Activated CD4-positive, alpha-beta memory T cell treated with anti-CD3 and anti-CD28 coated beads, Interleukin-2, amount 10 ng/mL, durations not matched to agents 7 days and 5 days (primary cell): ENCODE measurements at regions of chr14 and their contacts with region 1.

Region 1: GRCh38 chr14:65958664-65959562 is 527.3 kb upstream of the CCDC196 start:
- DNase-seq: no peak
- H3K4me3 Mint-ChIP-seq: no peak overlapping the region
- H3K27ac Mint-ChIP-seq: no peak overlapping the region
- H3K4me1 Mint-ChIP-seq: peaks cover 34% of the 10 kb centered on the region
- H3K27me3 Mint-ChIP-seq: no peaks in the 10 kb centered on the region

Region 2: DNA sequence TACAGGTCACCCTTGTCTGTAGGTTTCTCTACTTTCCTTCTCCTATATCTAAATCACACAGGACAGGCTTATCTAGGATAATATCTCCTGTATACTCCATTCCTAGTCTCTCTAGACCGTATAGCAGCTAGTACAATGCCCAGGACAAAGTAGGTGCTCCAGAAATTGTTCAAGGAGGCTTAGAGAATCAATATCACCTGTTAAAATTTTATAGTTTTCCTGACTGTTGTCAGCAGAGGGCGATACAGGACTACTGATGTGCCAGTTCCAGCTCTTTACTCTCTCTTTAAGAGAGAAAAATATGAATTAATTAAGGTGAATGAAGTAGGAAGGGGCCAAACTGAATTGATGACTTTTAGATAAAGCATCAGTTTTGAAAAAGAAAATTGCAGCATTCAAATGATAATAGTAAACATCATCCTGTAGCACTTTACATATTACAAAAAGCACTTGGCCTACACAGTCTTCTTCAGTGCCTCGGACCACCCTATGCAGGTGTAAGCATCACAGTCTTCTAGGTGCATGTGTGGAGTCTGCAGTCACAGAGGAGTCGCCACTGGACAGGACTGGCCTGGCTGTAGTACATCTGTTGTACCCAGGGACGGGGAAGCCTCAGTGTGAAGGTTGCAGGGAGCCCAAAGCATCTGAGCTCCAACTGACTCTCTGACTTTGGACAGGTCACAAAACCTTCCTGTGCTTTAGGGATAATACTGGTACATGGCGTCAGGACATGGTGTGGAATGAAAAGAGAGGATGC is 794.7 kb before region 1 on chr14:
- CTCF ChIA-PET with region 1: interaction called, 20 read pairs
- POLR2A ChIA-PET with region 1: interaction called, 3 read pairs
- DNase-seq: peak; percentile 49
- H3K4me3 Mint-ChIP-seq: no peak overlapping the region
- H3K27ac Mint-ChIP-seq: no peak overlapping the region
- H3K4me1 Mint-ChIP-seq: peaks cover 22% of the 10 kb centered on the region
- H3K27me3 Mint-ChIP-seq: no peaks in the 10 kb centered on the region

Region 3: GRCh38 chr14:65661861-65662260 is 297.1 kb before region 1 on chr14:
- CTCF ChIA-PET with region 1: no interaction called
- POLR2A ChIA-PET with region 1: no interaction called
- DNase-seq: no peak
- H3K4me3 Mint-ChIP-seq: no peak overlapping the region
- H3K27ac Mint-ChIP-seq: no peak overlapping the region
- H3K4me1 Mint-ChIP-seq: no peaks in the 10 kb centered on the region
- H3K27me3 Mint-ChIP-seq: no peaks in the 10 kb centered on the region

Region 4: DNA sequence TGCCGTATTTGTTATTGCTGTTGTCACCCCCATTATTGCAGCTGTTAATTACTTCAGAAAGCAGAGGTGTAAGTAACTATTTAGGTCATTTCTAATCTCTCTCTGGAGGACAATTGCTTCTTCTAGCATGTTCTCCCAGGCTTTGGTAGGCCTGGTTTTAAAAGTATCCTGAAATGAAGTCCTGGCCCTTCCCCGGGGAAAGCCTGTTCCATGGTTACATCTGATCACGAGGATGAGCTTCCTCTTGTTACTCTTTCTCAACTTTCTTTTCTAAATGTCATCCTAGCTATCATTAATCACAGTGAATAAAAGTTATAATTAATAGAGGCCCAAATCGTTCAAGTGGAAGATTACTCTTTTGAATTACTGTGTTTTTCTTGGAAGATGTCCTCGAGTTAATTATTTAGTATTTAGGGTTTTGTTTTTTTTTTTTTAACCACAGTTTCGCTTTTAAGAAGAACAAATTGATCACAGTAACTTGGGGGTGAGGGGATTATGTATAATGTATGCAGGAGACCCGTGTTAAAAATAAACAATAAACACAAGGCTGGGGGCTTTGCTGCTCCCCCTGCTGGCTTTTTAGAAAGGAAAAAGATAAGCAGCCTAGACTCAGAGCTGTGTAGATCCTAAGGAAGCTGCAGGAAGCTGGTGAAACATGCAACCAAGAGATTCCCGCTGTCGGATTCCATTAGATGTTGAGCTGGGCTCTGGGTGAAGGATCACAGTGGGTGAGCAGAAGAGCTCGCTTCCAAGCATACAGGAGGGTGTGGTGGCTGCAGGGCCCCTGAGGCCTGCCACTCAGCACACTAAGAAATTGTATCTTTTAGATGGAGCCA is 126.3 kb before region 1 on chr14:
- CTCF ChIA-PET with region 1: interaction called, 10 read pairs
- POLR2A ChIA-PET with region 1: no interaction called
- DNase-seq: no peak
- H3K4me3 Mint-ChIP-seq: no peak overlapping the region
- H3K27ac Mint-ChIP-seq: no peak overlapping the region
- H3K4me1 Mint-ChIP-seq: peaks cover 31% of the 10 kb centered on the region
- H3K27me3 Mint-ChIP-seq: peaks cover 2% of the 10 kb centered on the region

Region 5: DNA sequence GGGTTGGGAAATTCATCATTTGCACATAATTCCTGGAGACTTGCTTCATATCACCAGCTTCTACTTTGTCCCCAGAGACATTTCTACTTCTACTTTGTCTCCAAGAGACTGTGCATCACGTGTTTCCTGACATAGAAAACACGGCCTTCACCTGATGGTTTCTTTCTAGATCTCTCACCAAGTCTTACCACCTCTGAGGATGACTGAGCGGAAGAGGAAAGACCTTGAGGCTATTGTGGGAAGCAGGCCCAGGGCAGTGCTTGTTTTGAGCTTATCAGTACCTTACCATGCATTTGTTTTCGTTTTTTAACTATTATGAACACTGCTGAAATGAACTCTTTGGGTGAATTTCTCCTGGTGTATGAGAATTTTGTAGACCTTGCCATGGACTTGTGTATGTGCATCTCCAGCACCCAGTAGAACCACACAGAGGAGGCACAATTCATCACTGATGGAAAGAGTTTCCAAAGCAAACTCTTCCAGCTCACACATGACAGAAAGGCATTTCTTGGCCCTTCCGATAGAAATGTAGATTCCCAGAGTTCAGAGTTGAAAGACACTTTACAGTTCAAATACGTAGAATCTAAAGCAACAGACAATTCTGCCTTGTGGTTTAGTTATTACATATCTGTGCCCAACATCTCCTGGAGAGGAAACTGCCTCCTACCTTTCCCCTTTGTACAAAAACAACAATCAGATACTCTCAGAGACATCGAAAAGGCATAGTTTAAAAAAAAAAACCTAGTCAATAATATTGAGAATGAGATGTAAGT is 111.7 kb before region 1 on chr14:
- CTCF ChIA-PET with region 1: interaction called, 35 read pairs
- POLR2A ChIA-PET with region 1: interaction called, 19 read pairs
- DNase-seq: peak; percentile 88
- H3K4me3 Mint-ChIP-seq: peak overlapping the region; percentile 55
- H3K27ac Mint-ChIP-seq: peak overlapping the region; percentile 97
- H3K4me1 Mint-ChIP-seq: peaks cover 76% of the 10 kb centered on the region
- H3K27me3 Mint-ChIP-seq: no peaks in the 10 kb centered on the region

Region 6: DNA sequence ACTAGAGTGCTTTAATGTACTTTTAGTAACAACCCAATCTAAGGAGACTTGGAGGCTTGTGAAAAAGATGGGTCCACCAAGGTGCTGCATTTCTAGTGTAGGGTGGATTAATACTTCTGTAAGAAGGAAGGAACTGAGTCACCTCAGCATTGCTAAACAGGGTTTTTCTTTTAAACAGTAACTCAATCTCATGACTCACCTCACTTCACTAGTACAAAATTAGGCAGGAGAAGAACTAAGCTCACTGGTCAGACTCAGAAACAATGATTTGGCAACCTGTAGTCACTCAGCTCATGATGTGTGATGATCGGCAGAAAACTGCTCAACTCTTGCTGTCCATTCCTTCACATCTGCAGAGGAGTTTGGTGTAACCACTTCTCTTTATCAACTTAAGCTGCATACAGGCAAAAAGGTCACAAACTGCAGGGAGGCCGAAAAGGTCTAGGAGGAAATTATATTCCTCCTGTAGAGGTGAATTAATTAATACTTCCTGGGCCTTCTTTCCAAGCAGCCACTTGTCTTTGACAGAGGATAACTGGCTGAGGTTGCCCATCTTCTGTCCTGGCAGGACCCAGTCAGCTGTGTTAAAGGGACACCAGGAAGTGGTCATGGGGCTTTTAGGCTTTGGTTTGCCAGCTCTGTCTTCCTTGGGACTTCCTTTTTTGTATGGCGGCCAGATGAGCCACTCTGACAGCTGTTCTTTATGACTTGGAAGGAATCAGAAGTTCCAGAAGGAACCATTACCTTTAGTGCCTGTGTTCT is 79.5 kb before region 1 on chr14:
- CTCF ChIA-PET with region 1: interaction called, 11 read pairs
- POLR2A ChIA-PET with region 1: interaction called, 10 read pairs
- DNase-seq: peak; percentile 26
- H3K4me3 Mint-ChIP-seq: no peak overlapping the region
- H3K27ac Mint-ChIP-seq: peak overlapping the region; percentile 88
- H3K4me1 Mint-ChIP-seq: peaks cover 5% of the 10 kb centered on the region
- H3K27me3 Mint-ChIP-seq: no peaks in the 10 kb centered on the region

Region 7: DNA sequence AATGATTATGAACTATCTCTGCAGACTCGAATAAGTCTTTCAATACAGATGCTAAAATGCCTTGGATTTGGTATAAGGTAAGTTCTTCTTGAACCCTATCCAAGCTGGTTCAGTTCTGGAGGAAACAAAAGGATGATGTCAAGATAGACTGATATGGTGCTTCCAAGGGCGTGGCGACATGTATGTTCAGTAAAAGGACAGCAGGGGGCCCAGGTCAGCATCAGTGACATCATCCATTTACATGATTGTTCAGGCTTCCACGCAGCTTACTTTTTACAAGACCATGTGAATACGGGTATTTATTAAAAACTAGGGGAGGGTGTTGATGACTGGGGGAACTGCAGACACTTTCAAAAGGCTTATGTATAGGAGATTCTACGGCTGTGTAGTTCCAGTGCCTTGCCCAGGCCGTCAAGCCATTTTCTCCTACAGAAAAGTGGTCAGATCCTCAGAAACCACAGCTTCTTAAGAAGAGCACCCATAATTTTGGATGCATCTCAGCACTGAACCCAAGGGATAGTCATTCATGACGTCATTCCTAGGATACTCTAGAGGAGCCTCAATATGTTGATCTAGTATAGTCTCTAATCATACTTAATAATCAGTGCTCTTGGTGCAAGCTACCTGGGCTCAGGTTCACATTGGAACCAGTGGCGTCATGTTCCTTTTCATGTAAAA is 18.7 kb before region 1 on chr14:
- CTCF ChIA-PET with region 1: interaction called, 28 read pairs
- POLR2A ChIA-PET with region 1: no interaction called
- DNase-seq: peak; percentile 34
- H3K4me3 Mint-ChIP-seq: no peak overlapping the region
- H3K27ac Mint-ChIP-seq: no peak overlapping the region
- H3K4me1 Mint-ChIP-seq: peaks cover 53% of the 10 kb centered on the region
- H3K27me3 Mint-ChIP-seq: no peaks in the 10 kb centered on the region

Region 8: DNA sequence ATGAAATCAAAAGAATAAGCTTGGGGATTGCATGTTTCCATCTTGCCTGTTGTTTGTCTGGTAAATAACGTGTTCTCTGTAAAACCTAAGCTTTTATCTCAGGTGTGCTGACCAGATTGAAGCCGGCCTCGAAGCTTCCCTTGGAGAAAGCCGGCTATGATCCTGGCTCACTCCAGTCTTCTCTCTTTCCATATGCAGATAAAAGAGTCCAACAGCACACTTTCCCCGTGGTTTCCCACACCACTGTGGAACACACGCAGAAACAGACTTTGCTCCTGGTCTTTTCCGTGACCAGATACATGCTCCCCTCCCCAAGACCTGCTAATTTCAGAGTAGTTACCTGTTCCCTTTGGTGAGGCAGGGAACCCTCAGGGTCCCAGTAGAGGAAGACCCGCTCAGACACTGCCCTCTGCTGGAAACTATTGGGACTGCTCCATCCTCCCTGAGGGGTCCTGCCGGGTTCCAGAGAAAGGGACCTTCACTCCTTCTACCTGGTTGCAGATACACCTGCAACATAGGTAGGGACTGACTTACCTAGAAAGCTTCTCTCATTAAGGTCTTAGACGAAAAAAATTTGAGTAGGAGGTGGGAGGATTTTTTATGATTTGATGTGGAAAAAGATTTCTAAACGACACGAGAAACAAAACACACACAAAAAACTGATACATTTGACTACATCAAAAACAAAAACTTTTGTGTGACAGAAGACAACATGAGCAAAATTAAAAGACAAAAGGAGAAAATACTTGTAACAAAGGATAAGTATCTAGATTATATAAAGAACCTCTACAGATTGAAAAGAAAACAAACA is 111.8 kb after region 1 on chr14:
- CTCF ChIA-PET with region 1: interaction called, 38 read pairs
- POLR2A ChIA-PET with region 1: no interaction called
- DNase-seq: peak; percentile 71
- H3K4me3 Mint-ChIP-seq: no peak overlapping the region
- H3K27ac Mint-ChIP-seq: no peak overlapping the region
- H3K4me1 Mint-ChIP-seq: peaks cover 11% of the 10 kb centered on the region
- H3K27me3 Mint-ChIP-seq: peaks cover 12% of the 10 kb centered on the region